ENCODE measurements at regions of chr1 and their contacts with region 1.

Region 1: DNA sequence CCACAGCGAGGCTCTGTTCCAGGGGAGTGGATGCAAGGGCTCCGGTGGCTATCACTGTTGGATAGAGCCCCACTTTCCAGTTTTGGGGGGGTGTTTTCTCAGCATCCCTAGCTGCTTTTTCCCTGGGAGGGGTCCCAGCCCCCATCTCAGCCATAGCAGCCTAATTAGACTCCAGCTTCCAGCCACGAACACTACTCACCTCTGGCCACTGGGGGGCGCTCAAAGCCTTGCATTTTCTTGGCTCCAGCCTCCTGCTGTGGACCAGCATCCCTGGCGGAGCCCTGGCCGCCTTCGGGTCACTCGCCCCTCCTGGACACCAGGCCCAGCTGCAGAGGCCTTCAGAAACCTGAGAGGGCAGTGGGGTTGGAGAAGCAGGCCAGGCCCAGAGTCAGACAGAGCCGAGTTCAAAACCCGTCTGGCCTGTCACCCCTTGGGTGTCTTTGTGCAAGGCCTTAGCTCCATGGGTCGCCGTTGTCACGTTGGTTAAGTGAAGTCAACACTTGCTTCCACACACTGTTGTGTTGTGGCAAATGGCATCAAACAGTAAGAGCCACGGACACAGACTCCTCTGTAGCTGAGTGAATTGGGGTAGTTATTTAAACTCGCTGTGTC is 93.5 kb upstream of the ACTL8 start:
- DNase-seq: peak; percentile 33 to 92 (median 82)

Region 2: DNA sequence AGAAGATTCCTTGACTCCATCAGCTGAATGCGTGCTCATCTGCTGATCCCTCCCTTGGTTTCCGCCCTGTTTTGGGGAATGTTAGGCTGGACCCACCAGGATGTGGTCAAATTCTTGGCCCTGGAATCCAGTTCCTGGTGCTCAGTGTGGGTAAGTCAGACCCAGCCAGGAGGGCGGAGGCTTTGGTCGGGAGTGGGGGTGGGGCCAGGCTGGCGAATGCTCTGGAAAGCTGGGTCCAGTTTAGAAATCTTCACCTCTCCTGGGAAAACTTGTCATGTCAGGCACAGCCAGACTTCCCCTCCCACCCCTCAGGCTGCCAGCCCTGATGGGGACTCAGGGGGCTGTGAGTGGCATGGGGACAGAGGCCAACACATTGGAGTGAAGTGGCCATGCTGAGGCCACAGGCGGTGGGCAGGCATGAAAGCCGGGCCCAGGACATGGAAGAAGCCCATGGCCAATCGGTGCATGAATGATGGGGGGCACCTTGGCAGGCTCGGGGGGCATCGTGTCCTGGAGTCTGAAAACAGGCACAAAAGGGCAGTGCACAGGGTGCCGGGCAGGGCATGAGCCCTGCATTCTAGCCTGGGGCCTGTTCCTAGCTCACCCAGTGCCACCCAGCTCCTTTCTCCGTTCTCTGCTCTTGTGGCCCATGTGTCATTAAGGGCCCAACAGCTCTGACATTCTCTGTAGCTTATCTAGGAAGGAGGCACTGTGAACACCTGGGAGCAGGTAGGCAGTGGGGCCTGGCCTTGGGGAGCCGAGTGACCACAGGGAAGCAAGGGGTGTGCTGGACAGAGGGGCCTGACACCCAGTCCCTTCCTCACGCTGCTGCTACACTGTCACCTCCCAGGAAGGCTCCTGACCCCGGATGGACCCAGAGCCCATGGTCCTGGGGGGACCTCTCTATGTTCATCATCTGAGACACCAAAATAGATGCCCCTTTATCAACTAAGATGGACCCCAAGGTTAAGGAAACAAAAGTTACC is 471.3 kb before region 1 on chr1:
- intact Hi-C with region 1: no loop called
- DNase-seq: peak in 4 of 42 donors; percentile 1 to 8 (median 6)

Region 3: DNA sequence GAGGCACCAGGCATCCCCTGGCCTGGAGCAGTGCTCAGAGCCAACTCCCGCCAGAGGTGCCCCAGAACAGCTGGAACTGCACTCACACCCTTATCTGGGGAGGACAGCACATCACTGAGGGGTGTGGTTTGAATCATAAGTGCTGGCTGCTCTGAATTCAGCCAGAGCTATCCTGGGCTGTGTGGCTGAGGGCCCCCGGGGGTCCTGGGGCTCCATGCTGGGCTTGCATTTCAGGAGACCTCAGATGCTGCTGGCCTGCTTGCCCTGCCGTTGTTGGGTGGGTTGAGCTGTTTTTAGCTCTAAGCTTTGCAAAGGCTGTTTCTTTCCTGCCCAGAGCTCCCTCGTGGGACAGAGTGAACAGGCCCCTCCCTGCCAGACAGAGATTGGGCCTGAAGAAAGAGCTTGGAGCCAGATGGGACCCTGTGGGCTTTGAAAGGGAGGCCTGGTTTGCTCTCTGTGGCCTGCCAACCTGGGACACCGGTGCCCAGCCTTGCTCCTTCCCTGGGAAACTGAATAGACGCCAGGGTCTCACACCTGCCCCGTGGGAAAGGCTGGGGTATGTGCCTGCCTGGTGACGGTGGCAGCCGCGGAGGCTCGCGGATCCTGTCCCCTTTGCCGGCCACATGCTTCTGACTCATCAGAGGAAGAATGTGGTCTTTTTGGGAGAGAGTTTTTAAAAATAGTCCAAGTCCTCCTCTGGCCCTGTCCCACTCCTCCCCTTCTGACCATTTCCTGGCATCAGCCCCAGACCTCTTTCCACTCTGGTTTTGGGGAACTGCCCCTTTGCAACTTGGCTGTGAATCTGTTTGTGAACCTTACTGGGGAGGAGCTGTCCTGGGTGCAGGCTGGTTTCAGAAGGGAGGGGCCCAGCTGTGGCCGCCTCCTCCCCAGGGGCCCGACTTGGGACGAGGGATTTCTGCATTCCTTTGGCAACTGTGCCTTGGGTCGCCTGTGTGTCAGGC is 92.2 kb before region 1 on chr1:
- intact Hi-C with region 1: no loop called
- DNase-seq: peak; percentile 22 to 86 (median 58)

Region 4: GRCh38 chr1:17776426-17776825 is 114.8 kb after region 1 on chr1:
- intact Hi-C with region 1: no loop called
- DNase-seq: no peak

Region 5: GRCh38 chr1:18581420-18581880 is 919.8 kb after region 1 on chr1:
- intact Hi-C with region 1: loop called (anchors 10 kb)
- DNase-seq: peak in 37 of 42 donors; percentile 14 to 72 (median 46)